PC-3 (cell line): ENCODE measurements at regions of chr5 and their contacts with region 1.

Region 1: DNA sequence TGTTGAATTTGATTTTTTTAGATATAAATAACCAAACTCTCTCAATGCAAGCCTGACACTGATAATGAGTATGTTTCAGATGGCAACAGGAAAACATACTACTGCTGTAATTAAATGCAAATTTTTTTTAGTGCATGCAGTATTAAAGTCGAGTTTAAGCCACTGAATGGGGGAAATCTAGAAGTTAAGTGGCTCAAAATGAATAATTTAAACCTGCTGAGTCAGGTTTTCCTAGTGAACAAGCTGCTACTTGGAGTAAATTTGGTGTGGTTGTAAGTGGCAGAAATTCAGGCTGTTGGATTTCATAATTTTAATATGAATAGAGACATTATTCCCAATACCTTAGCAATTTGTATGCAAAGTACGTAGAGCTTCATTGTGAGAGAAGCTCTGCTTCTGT is 121.8 kb downstream of the SLF1 start:
- DNase-seq: no peak
- ATAC-seq: no peak
- H3K4me3 ChIP-seq: no peak overlapping the region
- H3K27ac ChIP-seq: no peak overlapping the region
- H3K4me1 ChIP-seq: no peaks in the 10 kb centered on the region
- H3K27me3 ChIP-seq: no peaks in the 10 kb centered on the region
- CTCF ChIP-seq: no peak

Region 2: DNA sequence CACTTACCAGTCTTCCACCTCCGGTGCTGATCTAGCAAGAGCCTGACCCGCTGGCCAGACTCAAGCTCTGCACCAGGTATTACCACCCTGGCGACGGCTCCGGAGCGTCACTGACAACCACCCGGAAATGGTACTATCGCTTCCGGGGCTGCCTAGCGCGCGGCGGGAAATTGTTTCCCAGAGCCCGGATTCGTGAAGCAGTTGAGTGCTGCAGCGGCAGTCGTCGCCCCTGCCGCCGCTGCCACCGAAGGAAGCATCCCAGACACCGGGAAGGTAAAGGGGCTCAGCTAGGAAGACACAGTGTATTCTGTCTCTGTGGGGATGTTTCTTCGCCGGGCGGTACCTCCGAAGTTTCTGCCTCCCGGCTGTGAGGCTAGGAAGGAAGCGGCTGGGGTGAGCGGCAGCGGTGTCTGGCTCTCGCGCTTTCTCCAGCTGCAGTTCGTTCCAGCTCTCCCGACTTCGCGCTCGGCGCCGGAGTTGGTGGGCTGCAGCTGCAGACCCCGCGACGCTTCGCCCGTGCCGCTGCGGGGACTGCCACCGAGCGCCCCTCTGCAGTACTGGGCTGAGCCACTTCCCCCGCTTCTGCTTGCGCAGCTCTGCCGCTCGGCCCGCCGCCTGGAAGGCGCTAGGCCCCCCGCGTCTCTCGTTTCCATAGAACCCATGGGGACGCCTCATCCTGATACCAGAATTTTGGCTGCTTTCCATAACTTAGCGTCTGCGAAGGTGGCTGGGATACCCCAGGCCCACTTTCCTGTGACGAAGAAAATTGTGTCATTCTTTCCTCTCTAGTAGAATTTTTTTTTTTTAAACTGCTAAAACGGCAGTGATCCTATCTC is 121.6 kb before region 1 on chr5 and contains the starts of genes KIAA0825 and SLF1:
- CTCF ChIA-PET with region 1: no interaction called
- POLR2A ChIA-PET with region 1: no interaction called
- intact Hi-C with region 1: loop called (anchors 2 kb)
- DNase-seq: peak; percentile 84
- ATAC-seq: peak; percentile 97
- H3K4me3 ChIP-seq: peak within 1 kb of the TSS; percentile 81
- H3K27ac ChIP-seq: peak within 1 kb of the TSS; percentile 60
- H3K4me1 ChIP-seq: peaks cover 7% of the 10 kb centered on the region
- H3K27me3 ChIP-seq: no peaks in the 10 kb centered on the region
- CTCF ChIP-seq: no peak
- total RNA-seq, gene KIAA0825: 0.07 and 0.23 TPM in 2 replicates
- total RNA-seq, gene SLF1: 23.6 and 27.8 TPM in 2 replicates

Region 3: DNA sequence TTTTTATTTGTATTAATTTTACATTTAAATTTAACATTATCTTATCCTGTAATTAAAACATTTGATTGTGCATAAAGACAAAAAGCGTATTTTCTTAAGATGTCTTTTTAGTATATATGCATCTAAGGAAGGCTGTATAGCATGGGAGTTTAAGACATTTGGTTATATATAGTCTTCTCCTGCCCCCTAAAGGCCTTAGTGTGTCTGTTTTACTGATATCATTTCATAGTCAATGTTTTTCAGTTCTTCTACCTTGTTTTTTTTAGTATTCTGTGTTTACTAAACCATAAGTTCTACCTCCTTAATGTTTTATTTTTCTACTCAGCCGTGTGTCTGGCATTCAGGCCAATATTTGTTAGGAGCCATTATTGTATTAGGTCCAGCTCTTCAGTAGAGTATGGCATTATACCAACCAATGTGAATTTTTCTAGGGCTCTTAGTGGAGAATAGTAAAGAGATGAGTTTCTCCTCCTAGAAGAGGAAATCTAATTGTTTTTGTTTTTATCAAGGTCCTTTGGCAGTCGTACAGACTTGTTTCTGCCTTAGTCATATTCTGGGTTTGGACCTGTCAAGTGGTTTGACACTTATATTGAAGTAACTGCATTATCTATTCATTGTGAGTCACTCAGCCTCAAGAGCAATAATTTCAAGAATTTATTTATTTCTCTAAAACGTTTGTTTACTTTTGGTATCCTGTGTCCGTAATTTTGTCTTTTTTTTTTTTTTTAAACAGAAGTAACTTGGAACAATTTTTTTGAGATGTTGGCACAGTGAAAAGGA is 47.1 kb before region 1 on chr5:
- CTCF ChIA-PET with region 1: no interaction called
- POLR2A ChIA-PET with region 1: no interaction called
- intact Hi-C with region 1: loop called (anchors 5 kb)
- DNase-seq: peak; percentile 70
- ATAC-seq: peak; percentile 88
- H3K4me3 ChIP-seq: no peak overlapping the region
- H3K27ac ChIP-seq: peak overlapping the region; percentile 34; the same call in 1 of the 2 replicates
- H3K4me1 ChIP-seq: peaks cover 15% of the 10 kb centered on the region
- H3K27me3 ChIP-seq: no peaks in the 10 kb centered on the region
- CTCF ChIP-seq: peak; percentile 56

Region 4: GRCh38 chr5:95543017-95543705 is 802.9 kb after region 1 on chr5:
- CTCF ChIA-PET with region 1: no interaction called
- POLR2A ChIA-PET with region 1: no interaction called
- intact Hi-C with region 1: no loop called
- DNase-seq: no peak
- ATAC-seq: peak; percentile 27; the same call in 1 of the 2 replicates
- H3K4me3 ChIP-seq: no peak overlapping the region
- H3K27ac ChIP-seq: no peak overlapping the region
- H3K4me1 ChIP-seq: no peaks in the 10 kb centered on the region
- H3K27me3 ChIP-seq: no peaks in the 10 kb centered on the region
- CTCF ChIP-seq: no peak